ENCODE measurements at regions of chr1 and their contacts with region 1.

Region 1: GRCh38 chr1:17059739-17060460 is 6.1 kb upstream of the SDHB start:
- DNase-seq: peak in 5 of 9 donors; percentile 7 to 37 (median 21)
- ATAC-seq: peak; percentile 95
- H3K4me3 ChIP-seq: no peak overlapping the region
- H3K4me3 Mint-ChIP-seq: no peak overlapping the region
- H3K27ac ChIP-seq: no peak overlapping the region
- H3K27ac Mint-ChIP-seq: no peak overlapping the region
- H3K4me1 ChIP-seq: no peaks in the 10 kb centered on the region
- H3K4me1 Mint-ChIP-seq: peaks cover 0 to 8% (median 0%) of the 10 kb centered on the region in 7 donors
- H3K27me3 ChIP-seq: no peaks in the 10 kb centered on the region
- H3K27me3 Mint-ChIP-seq: peaks cover 4 to 19% (median 7%) of the 10 kb centered on the region in 5 donors

Region 2: DNA sequence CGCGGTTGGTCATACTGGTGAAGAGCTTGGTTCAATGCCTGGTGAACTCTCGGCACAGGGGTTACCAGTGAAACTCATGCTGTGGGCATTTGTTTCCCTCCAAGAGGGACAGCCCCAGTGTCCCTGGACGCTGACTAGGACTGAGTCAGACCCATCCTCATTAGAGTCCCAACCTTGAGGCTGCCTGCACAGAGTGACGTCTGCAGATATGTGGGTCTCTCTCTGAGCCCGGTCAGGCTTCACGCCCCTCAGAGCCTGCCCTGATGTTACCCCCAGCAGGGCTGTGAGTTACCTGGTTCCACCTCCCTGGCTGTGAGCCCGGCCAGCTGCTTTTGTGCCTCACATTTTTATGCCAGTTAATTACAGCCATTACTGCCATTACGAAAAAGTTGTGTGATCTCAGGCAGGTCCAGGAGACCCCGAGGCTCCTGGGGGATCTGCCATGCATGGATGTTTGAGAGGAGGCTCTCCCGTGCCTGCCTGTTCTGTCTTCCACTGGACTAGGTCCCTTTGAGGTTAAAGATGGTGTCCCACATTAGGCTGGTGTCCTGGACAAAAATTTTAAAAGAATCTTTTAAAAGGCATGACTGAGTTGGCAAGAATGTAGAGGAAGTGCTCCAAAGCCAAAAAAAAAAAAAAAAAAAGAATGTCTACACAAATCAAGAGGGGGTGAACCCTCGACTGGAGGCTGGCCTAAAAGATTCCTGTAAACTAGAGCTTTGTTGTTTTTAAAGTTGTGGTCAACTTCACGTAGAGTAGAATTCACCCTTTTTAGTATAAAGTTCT is 108.4 kb after region 1 on chr1:
- CTCF ChIA-PET with region 1: no interaction called
- POLR2A ChIA-PET with region 1: no interaction called
- intact Hi-C with region 1: no loop called
- DNase-seq: no peak
- ATAC-seq: no peak
- H3K4me3 ChIP-seq: no peak overlapping the region
- H3K4me3 Mint-ChIP-seq: no peak overlapping the region
- H3K27ac ChIP-seq: no peak overlapping the region
- H3K27ac Mint-ChIP-seq: no peak overlapping the region
- H3K4me1 ChIP-seq: no peaks in the 10 kb centered on the region
- H3K4me1 Mint-ChIP-seq: peaks cover 0 to 3% (median 0%) of the 10 kb centered on the region in 7 donors
- H3K27me3 ChIP-seq: no peaks in the 10 kb centered on the region
- H3K27me3 Mint-ChIP-seq: peaks cover 0 to 13% (median 3%) of the 10 kb centered on the region in 5 donors

Region 3: DNA sequence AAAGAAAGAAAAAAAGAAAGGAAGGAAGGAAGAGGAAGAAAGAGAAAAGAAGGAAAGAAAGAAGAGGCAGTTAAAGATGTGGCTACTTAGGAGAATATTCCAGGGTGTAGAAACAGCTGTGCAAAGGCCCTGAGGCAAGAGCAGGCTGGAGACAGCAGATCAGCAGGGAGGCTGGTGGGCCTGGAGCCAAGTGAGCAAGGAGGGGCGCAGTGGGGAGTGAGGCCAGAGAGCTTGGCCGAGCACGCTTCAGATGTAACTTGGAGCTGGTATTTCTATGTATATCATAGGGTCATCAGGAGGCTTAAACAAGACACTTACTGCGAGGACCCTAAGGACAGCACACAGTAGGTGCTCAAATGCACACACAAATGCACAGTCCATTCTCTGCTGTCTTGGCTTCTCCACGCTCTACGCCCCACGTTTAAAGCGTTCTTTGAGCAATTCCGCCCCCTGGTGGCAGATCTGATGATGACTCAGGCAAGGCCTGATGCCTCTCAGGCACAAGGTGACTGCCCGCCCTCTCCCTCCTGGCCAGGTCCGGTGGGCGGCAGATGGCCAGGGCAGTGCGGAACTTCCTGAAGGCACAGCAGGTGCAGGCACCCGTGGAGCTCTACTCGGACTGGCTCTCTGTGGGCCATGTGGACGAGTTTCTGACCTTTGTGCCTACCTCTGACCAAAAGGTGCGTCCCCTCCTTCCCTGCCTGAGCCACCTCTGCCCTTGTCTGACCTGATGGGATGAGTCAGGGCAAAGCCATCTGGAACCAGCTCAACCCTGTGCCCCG is 177.1 kb after region 1 on chr1:
- CTCF ChIA-PET with region 1: no interaction called
- POLR2A ChIA-PET with region 1: no interaction called
- intact Hi-C with region 1: loop called in 1 of 2 experiments (anchors 2 kb)
- DNase-seq: peak; percentile 54 to 85 (median 80)
- ATAC-seq: peak; percentile 84
- H3K4me3 ChIP-seq: no peak overlapping the region
- H3K4me3 Mint-ChIP-seq: no peak overlapping the region
- H3K27ac ChIP-seq: no peak overlapping the region
- H3K27ac Mint-ChIP-seq: no peak overlapping the region
- H3K4me1 ChIP-seq: no peaks in the 10 kb centered on the region
- H3K4me1 Mint-ChIP-seq: peaks cover 0 to 8% (median 6%) of the 10 kb centered on the region in 7 donors
- H3K27me3 ChIP-seq: no peaks in the 10 kb centered on the region
- H3K27me3 Mint-ChIP-seq: peaks cover 0 to 8% (median 0%) of the 10 kb centered on the region in 5 donors

Measured in naive thymus-derived CD4-positive, alpha-beta T cell (primary cell).